IMR-90 (cell line): ENCODE measurements at regions of chr22 and their contacts with region 1.

Region 1: GRCh38 chr22:42050641-42051180 is 19.9 kb downstream of the NAGA start:
- DNase-seq: no peak
- ATAC-seq: no peak
- H3K4me3 ChIP-seq: no peak overlapping the region
- H3K27ac ChIP-seq: no peak overlapping the region
- H3K4me1 ChIP-seq: no peaks in the 10 kb centered on the region
- H3K27me3 ChIP-seq: no peaks in the 10 kb centered on the region
- CTCF ChIP-seq: no peak
- POLR2A ChIP-seq: no peak
- RAD21 ChIP-seq: no peak

Region 2: GRCh38 chr22:41062146-41062545 is 988.6 kb before region 1 on chr22:
- CTCF ChIA-PET with region 1: no interaction called
- POLR2A ChIA-PET with region 1: interaction called, 19 read pairs
- dilution Hi-C with region 1: no loop called
- in situ Hi-C with region 1: no loop called
- intact Hi-C with region 1: no loop called
- DNase-seq: no peak
- ATAC-seq: no peak
- H3K4me3 ChIP-seq: no peak overlapping the region
- H3K27ac ChIP-seq: no peak overlapping the region
- H3K4me1 ChIP-seq: no peaks in the 10 kb centered on the region
- H3K27me3 ChIP-seq: no peaks in the 10 kb centered on the region
- CTCF ChIP-seq: no peak
- POLR2A ChIP-seq: no peak
- RAD21 ChIP-seq: no peak

Region 3: DNA sequence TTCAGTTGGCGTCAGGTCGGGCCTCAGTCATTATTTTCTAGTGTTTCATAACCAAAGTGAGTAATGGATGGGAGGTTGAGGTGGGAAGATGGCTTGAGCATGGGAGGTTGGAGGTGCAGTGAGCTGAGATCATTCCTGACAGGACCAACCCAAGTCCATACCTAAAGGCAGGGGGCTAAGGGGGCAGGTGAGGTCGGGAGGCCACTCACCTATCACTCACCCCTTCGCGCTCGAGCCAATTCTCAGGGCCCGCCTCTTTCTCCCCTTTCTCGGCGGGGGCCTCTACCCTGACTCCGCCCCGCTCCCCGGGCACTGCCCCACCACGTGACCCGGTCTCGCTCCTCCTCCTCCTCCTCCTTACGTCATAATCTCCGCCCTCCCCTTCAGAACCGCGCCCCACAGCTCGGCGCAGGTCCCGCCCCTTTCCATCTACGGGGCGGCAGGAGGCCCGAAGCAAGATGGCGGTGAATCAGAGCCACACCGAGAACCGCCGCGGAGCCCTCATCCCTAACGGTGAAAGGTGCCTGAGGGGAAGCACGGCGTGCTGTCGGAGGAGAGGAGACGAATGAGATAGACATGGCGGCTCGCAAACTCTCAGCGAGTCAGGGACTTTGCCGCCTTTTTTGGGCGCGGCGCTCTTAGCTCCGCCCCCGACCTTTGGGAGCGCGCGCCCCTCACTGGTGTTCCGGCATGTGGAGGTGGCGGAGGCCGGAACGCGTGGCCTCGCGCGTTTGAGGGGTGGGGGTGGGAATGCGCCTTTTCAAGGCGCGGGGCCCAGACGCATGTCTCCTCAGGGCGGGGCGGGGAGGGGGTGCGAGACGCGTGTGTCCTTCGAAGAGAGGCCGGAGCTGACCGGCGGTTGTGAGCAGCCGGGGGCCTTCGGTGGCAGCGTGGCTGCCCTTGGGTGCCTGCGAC is 52.1 kb before region 1 on chr22 and contains the start of gene WBP2NL:
- CTCF ChIA-PET with region 1: no interaction called
- POLR2A ChIA-PET with region 1: no interaction called
- dilution Hi-C with region 1: no loop called
- in situ Hi-C with region 1: no loop called
- intact Hi-C with region 1: no loop called
- DNase-seq: peak; percentile 51
- ATAC-seq: peak; percentile 94
- H3K4me3 ChIP-seq: peak within 1 kb of the TSS; percentile 57
- H3K27ac ChIP-seq: no peak within 1 kb of the TSS
- H3K4me1 ChIP-seq: no peaks in the 10 kb centered on the region
- H3K27me3 ChIP-seq: peaks cover 15% of the 10 kb centered on the region
- CTCF ChIP-seq: no peak
- POLR2A ChIP-seq: no peak
- RAD21 ChIP-seq: no peak
- total RNA-seq, gene WBP2NL: not detected in 2 replicates

Region 4: GRCh38 chr22:42444077-42444904 is 393.6 kb after region 1 on chr22:
- CTCF ChIA-PET with region 1: no interaction called
- POLR2A ChIA-PET with region 1: interaction called, 15 read pairs
- dilution Hi-C with region 1: no loop called
- in situ Hi-C with region 1: no loop called
- intact Hi-C with region 1: no loop called
- DNase-seq: peak; percentile 87
- ATAC-seq: peak; percentile 90
- H3K4me3 ChIP-seq: peak overlapping the region; percentile 27
- H3K27ac ChIP-seq: peak overlapping the region; percentile 24
- H3K4me1 ChIP-seq: peaks cover 12% of the 10 kb centered on the region; the same call in 1 of the 2 replicates
- H3K27me3 ChIP-seq: peaks cover 3% of the 10 kb centered on the region; the same call in 1 of the 2 replicates
- CTCF ChIP-seq: peak; percentile 71
- POLR2A ChIP-seq: no peak
- RAD21 ChIP-seq: peak; percentile 62